Right ventricle myocardium inferior (tissue), 1 donor: ENCODE measurements at regions of chr10 and their contacts with region 1.

Region 1: DNA sequence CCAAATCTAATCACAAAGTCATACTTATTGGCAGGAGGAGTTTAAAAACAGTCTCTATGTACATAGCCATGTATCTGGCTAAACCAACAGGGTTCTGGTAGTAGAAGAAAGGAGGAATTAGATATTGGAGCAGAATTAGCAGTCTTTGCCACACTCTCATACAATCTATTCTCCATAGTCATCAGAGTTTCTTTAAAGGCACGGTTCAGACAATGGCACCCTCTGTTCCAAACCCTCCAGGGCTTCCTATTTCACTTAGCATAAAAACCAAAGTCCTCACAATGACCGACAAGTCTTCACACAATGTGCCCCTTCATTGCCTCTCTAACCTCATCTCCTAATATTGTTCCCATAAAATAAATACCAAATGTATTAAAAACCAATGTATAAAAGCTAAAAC is 12.7 kb downstream of the ZNF438 start:
- DNase-seq: no peak
- ATAC-seq: peak; percentile 18

Region 2: DNA sequence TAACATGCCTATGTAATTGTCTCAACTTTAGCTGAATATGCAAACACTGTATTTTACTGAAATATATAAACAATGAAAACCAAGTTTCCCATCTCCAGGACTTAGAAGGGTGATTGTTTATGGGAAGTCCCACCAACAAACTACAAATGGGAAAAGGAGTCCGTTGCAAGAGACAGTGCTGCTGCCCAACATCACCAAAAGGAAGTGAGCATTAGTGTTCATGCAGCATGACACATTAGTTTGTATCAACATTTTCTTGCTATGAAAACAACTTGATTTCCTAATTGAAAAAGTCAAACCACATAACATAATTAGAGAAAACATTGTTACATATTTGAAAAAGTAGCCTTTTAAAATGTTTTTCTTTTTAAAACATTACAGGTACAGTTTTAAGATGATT is 125.8 kb before region 1 on chr10:
- intact Hi-C with region 1: no loop called
- DNase-seq: no peak
- ATAC-seq: no peak

Region 3: GRCh38 chr10:30980951-30981616 is 37.9 kb before region 1 on chr10:
- intact Hi-C with region 1: loop called (anchors 2 kb)
- DNase-seq: no peak
- ATAC-seq: peak; percentile 94